IMR-90 (cell line): ENCODE measurements at regions of chr10 and their contacts with region 1.

Region 1: DNA sequence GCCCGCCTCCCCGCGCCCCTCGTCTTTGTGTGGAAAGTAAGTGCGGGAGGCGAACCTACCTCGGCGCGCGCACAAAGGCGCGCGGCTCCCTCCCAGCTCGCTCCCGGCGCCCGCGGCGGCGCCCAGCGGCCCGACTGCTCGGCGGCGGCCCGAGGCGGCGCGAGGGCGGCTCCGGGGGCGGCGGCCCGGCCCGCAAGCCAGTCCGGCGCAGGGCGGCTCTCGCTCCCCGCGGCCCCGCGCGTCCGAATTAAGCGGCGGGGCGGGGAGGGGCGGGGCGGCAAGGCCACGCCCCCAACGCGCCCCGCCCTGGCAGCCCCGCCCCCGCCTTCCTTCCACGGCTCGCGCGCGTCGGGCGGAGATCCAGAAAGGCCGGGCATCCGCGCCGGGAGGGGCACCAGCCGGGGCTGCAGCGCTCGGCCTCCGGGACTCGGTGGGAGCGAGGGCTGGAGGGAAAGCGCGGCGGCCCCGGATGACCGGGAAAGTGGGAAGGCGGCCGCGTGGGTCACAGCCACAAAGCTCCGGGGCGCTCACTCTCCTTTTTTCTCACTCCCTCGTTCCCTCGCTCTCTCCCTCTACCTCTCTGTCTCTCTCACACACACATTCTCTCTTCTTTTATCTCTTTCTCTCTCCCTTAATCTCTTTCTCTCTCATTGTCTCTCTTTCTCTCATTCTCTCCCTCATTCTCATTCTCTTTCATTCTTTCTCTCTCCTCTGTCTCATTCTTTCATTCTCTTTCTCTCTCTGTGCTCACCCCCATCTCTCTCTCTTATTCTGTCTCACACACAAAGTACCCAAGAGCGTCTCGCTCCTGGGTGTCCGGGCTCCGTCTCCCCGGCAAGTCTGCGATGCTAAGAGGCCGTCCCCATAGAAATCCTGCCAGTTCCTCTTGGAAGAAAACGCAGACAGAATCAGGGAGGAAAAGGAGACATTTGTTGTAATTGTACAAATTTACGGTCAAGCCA is 170.2 kb downstream of the FAM107B start:
- DNase-seq: peak; percentile 70
- ATAC-seq: peak; percentile 92
- H3K4me3 ChIP-seq: peak overlapping the region; percentile 99
- H3K27ac ChIP-seq: peak overlapping the region; percentile 70
- H3K4me1 ChIP-seq: peaks cover 9% of the 10 kb centered on the region
- H3K27me3 ChIP-seq: no peaks in the 10 kb centered on the region
- CTCF ChIP-seq: no peak
- POLR2A ChIP-seq: peak; percentile 53
- RAD21 ChIP-seq: no peak

Region 2: GRCh38 chr10:14293526-14293925 is 310.9 kb before region 1 on chr10:
- CTCF ChIA-PET with region 1: no interaction called
- POLR2A ChIA-PET with region 1: no interaction called
- dilution Hi-C with region 1: no loop called
- in situ Hi-C with region 1: no loop called
- intact Hi-C with region 1: no loop called
- DNase-seq: peak; percentile 17
- ATAC-seq: no peak
- H3K4me3 ChIP-seq: no peak overlapping the region
- H3K27ac ChIP-seq: no peak overlapping the region
- H3K4me1 ChIP-seq: no peaks in the 10 kb centered on the region; the same call in 1 of the 2 replicates
- H3K27me3 ChIP-seq: peaks cover 26% of the 10 kb centered on the region
- CTCF ChIP-seq: no peak
- POLR2A ChIP-seq: no peak
- RAD21 ChIP-seq: no peak

Region 3: GRCh38 chr10:14478604-14479003 is 125.9 kb before region 1 on chr10:
- CTCF ChIA-PET with region 1: no interaction called
- POLR2A ChIA-PET with region 1: no interaction called
- dilution Hi-C with region 1: no loop called
- in situ Hi-C with region 1: no loop called
- intact Hi-C with region 1: no loop called
- DNase-seq: peak; percentile 84
- ATAC-seq: peak; percentile 89
- H3K4me3 ChIP-seq: no peak overlapping the region
- H3K27ac ChIP-seq: no peak overlapping the region
- H3K4me1 ChIP-seq: peaks cover 16% of the 10 kb centered on the region; the same call in 1 of the 2 replicates
- H3K27me3 ChIP-seq: no peaks in the 10 kb centered on the region
- CTCF ChIP-seq: peak; percentile 93
- POLR2A ChIP-seq: peak; percentile 61
- RAD21 ChIP-seq: peak; percentile 98

Region 4: GRCh38 chr10:14500172-14500765 is 104.2 kb before region 1 on chr10:
- CTCF ChIA-PET with region 1: no interaction called
- POLR2A ChIA-PET with region 1: no interaction called
- dilution Hi-C with region 1: no loop called
- in situ Hi-C with region 1: no loop called
- intact Hi-C with region 1: loop called (anchors 5 kb)
- DNase-seq: no peak
- ATAC-seq: no peak
- H3K4me3 ChIP-seq: no peak overlapping the region
- H3K27ac ChIP-seq: no peak overlapping the region
- H3K4me1 ChIP-seq: peaks cover 7% of the 10 kb centered on the region; the same call in 1 of the 2 replicates
- H3K27me3 ChIP-seq: no peaks in the 10 kb centered on the region
- CTCF ChIP-seq: no peak
- POLR2A ChIP-seq: no peak
- RAD21 ChIP-seq: no peak

Region 5: GRCh38 chr10:14536241-14537213 is 67.9 kb before region 1 on chr10:
- CTCF ChIA-PET with region 1: no interaction called
- POLR2A ChIA-PET with region 1: no interaction called
- dilution Hi-C with region 1: no loop called
- in situ Hi-C with region 1: no loop called
- intact Hi-C with region 1: loop called (anchors 2 kb)
- DNase-seq: peak; percentile 57
- ATAC-seq: peak; percentile 28; the same call in 1 of the 2 replicates
- H3K4me3 ChIP-seq: no peak overlapping the region
- H3K27ac ChIP-seq: no peak overlapping the region
- H3K4me1 ChIP-seq: peaks cover 34% of the 10 kb centered on the region
- H3K27me3 ChIP-seq: no peaks in the 10 kb centered on the region
- CTCF ChIP-seq: peak; percentile 55
- POLR2A ChIP-seq: no peak
- RAD21 ChIP-seq: peak; percentile 76

Region 6: DNA sequence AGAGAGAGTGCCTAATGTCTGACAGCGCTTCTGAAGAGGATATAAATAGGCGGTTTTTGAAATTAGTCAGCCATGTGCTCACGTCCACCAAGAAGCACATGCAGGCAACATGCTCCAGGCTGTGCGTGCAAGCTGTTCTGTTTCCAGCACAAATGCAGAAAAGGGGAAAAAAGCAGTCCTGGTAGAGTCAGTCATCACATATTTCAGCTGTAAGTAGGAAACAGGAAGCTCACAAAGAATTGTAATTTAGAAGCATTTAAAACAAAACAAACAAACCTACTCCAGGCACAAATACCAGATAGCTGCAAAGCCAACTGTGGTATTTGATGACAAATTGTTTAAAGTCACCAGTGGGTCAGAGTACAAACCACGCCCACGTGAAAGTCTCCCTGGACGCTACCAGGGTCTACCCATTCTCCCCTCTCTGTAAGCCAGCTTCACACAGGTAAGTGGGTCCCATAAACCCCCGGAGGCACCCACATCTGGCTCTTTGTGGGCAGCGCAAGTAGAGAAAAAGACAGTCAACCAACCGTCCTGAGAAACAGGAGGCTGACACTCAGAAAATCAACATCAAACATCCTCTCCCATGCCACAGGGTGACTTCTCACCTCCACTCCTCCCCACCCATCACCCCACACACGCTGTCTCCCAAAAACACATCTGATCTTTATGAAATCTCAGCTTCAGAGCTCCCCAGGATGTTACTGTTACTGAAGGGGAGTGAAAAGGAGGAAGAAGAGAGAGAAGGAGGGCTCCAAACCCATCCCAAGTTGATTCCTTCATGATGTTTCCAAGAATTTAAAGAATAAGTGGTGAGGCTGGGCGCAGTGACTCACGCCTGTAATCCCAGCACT is 16.2 kb before region 1 on chr10:
- CTCF ChIA-PET with region 1: no interaction called
- POLR2A ChIA-PET with region 1: no interaction called
- dilution Hi-C with region 1: no loop called
- in situ Hi-C with region 1: no loop called
- intact Hi-C with region 1: loop called (anchors 2 kb)
- DNase-seq: peak; percentile 100
- ATAC-seq: peak; percentile 83
- H3K4me3 ChIP-seq: peak overlapping the region; percentile 1; the same call in 1 of the 2 replicates
- H3K27ac ChIP-seq: peak overlapping the region; percentile 99
- H3K4me1 ChIP-seq: peaks cover 30% of the 10 kb centered on the region
- H3K27me3 ChIP-seq: no peaks in the 10 kb centered on the region
- CTCF ChIP-seq: no peak
- POLR2A ChIP-seq: peak; percentile 50
- RAD21 ChIP-seq: peak; percentile 22

Region 7: GRCh38 chr10:14837757-14838581 is 233.5 kb after region 1 on chr10 and contains the starts of genes CDNF, HSPA14 and MSANTD7:
- CTCF ChIA-PET with region 1: no interaction called
- POLR2A ChIA-PET with region 1: no interaction called
- dilution Hi-C with region 1: no loop called
- in situ Hi-C with region 1: no loop called
- intact Hi-C with region 1: loop called (anchors 5 kb)
- DNase-seq: peak; percentile 99
- ATAC-seq: peak; percentile 97
- H3K4me3 ChIP-seq: peak within 1 kb of the TSS; percentile 74
- H3K27ac ChIP-seq: peak within 1 kb of the TSS; percentile 82
- H3K4me1 ChIP-seq: peaks cover 1% of the 10 kb centered on the region; the same call in 1 of the 2 replicates
- H3K27me3 ChIP-seq: no peaks in the 10 kb centered on the region
- CTCF ChIP-seq: no peak
- POLR2A ChIP-seq: peak; percentile 91
- RAD21 ChIP-seq: 0 out of 2 replicates have a peak, but pooled peaks have one; percentile 8
- total RNA-seq, gene CDNF: 0.72 and 0.83 TPM in 2 replicates
- total RNA-seq, gene HSPA14: 11.8 and 15.6 TPM in 2 replicates
- total RNA-seq, gene MSANTD7: 16.0 and 17.2 TPM in 2 replicates